ENCODE measurements at regions of chr3 and their contacts with region 1.

Region 1: GRCh38 chr3:70832441-70833181 is 520.2 kb upstream of the MDFIC2 start:
- DNase-seq: no peak
- H3K4me3 ChIP-seq: no peak overlapping the region
- H3K27ac ChIP-seq: no peak overlapping the region
- H3K4me1 ChIP-seq: no peaks in the 10 kb centered on the region
- H3K27me3 ChIP-seq: no peaks in the 10 kb centered on the region
- CTCF ChIP-seq: no peak
- POLR2A ChIP-seq: no peak

Region 2: GRCh38 chr3:70973558-70973957 is 140.9 kb after region 1 on chr3:
- intact Hi-C with region 1: loop called (anchors 10 kb)
- DNase-seq: no peak
- H3K4me3 ChIP-seq: no peak overlapping the region
- H3K27ac ChIP-seq: no peak overlapping the region
- H3K4me1 ChIP-seq: no peaks in the 10 kb centered on the region
- H3K27me3 ChIP-seq: no peaks in the 10 kb centered on the region
- CTCF ChIP-seq: no peak
- POLR2A ChIP-seq: no peak

Region 3: GRCh38 chr3:72193771-72194463 is 1361.3 kb after region 1 on chr3:
- intact Hi-C with region 1: no loop called
- DNase-seq: peak in 1 of 2 donors; percentile 96
- H3K4me3 ChIP-seq: no peak overlapping the region
- H3K27ac ChIP-seq: peak overlapping the region; percentile 74
- H3K4me1 ChIP-seq: no peaks in the 10 kb centered on the region
- H3K27me3 ChIP-seq: no peaks in the 10 kb centered on the region
- CTCF ChIP-seq: no peak
- POLR2A ChIP-seq: no peak